ENCODE measurements at regions of chr6 and their contacts with region 1.

Region 1: GRCh38 chr6:137900815-137901214 is 33.8 kb downstream of the TNFAIP3 start:
- DNase-seq: no peak
- ATAC-seq: no peak
- H3K4me3 ChIP-seq: no peak overlapping the region
- H3K27ac ChIP-seq: no peak overlapping the region
- H3K4me1 ChIP-seq: peaks cover 11 to 51% of the 10 kb centered on the region in 2 experiments
- H3K27me3 ChIP-seq: no peaks in the 10 kb centered on the region
- CTCF ChIP-seq: no peak
- EP300 ChIP-seq: no peak
- POLR2A ChIP-seq: no peak
- RAD21 ChIP-seq: no peak

Region 2: DNA sequence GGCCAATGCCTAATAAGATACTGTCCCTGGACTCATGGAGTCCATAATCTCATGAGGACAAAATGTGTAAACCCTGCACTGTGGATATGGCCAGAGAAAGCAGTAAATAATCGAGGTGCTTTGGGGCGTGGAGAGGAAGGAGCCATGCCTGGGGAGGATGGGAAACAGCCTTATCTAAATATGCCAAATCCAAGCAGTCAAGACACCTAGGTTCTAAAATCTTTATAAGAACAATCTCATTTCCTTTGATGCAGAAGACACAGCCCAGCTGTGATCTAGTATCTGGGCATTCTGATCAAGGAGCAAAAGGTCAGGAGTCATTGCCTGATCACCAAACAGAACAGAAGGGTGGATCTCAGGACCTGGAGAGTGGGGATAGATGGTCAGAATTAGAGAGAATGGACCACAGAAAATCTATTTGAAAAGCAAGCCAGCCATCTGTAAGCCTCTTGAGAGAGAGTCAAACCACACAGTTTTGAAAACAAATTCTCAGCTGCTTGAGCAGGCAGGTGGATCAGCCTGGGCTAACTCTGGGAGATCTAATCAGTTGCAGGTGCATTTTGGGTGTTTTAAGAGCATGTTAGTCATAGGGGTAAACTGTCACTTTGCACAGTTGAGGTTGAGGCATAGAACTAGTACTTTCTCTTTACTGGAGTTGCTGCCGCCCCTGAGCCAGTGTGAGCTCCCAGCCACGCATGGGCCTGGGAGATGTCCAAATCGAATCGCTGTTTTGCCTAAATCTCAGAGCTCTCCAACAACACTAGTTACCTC is 164.6 kb before region 1 on chr6:
- CTCF ChIA-PET with region 1: no interaction called
- POLR2A ChIA-PET with region 1: no interaction called
- in situ Hi-C with region 1: no loop called
- intact Hi-C with region 1: no loop called
- DNase-seq: no peak
- ATAC-seq: no peak; the same call in 2 of the 3 replicates
- H3K4me3 ChIP-seq: no peak overlapping the region
- H3K27ac ChIP-seq: no peak overlapping the region
- H3K4me1 ChIP-seq: no peaks in the 10 kb centered on the region; a peak in 1 of 5 replicates
- H3K27me3 ChIP-seq: peaks cover 13 to 20% of the 10 kb centered on the region in 2 experiments; a peak in 4 of 5 replicates
- CTCF ChIP-seq: no peak
- EP300 ChIP-seq: no peak
- POLR2A ChIP-seq: no peak
- RAD21 ChIP-seq: no peak

Region 3: DNA sequence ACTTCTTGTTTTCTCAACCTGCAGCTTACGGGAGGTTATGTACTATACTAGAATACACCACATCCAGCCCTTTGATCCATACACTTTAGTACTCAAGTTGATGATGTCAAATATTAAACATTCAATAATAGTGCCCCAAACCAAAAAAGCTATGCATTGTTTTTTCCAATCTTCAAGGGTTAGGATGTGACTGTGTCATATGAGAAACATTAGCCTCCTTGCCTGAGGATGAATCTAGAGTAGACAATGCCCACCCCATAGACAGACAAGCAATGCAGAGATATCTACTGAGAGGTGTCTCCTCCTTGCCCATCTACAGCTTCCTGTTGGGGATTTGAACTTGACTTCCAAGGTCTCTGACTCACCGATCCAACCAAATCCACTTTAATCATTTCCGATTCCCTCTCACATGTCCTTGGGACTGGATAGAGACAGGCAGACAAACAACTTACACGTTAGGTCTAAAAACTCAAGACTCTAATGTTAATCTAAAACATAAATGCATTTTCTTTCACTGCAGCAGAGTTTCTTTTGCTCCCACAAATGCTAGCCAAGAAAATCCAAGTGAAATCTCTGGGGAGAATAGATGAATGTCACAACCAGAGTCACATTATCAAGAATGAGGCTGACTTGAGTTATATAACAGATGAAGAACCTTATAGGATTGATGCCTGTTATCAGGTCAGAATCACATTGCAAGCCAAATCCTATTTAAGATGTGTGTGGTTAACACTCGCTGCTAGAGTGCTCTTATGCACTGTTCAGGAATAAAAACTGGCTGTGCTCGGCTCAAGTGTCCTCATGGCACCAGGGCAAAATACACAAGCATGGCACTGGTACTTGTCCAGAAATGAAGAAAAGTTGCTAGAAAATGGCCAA is 109.3 kb before region 1 on chr6:
- CTCF ChIA-PET with region 1: no interaction called
- POLR2A ChIA-PET with region 1: no interaction called
- in situ Hi-C with region 1: no loop called
- intact Hi-C with region 1: no loop called
- DNase-seq: no peak
- ATAC-seq: no peak
- H3K4me3 ChIP-seq: no peak overlapping the region
- H3K27ac ChIP-seq: no peak overlapping the region
- H3K4me1 ChIP-seq: peaks cover 0 to 46% of the 10 kb centered on the region in 2 experiments; a peak in 3 of 5 replicates
- H3K27me3 ChIP-seq: no peaks in the 10 kb centered on the region
- CTCF ChIP-seq: no peak
- EP300 ChIP-seq: no peak
- POLR2A ChIP-seq: no peak
- RAD21 ChIP-seq: no peak

Region 4: DNA sequence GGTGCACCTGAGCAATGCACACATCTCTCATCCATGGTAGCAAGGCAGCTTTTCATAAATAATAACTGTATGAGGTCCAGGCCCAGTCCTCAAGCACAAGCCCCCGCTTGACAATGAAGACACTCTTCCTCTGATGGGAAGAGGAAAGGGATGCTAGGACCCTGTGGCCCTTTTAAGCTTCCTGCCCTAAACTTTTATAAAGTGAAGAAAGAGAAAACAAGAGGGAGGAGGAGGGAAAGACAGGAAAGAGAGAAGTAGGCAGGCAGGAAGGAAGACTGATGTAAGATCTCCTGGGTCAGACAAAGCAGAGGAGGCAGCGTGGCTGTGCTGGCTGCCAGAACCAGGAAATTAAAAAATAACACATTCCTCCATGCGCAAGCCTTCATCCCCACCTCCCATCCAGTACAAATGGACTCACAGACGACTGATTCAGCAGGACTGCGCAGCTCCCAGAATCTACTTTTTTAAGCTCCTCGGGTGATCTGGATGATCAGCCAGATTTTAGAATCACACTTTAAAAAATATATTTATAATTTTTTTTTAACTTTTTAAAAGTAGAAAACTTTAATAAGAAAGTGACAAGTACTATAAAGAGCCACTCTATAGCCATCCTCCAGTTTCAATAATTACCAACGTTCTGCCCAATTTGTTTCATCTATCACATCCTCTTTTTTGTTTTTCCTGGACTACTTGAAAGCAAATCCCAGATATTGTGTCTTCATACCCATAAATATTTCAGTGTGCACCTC is 17.2 kb before region 1 on chr6:
- CTCF ChIA-PET with region 1: no interaction called
- POLR2A ChIA-PET with region 1: interaction called, 14 read pairs
- in situ Hi-C with region 1: no loop called
- intact Hi-C with region 1: no loop called
- DNase-seq: no peak
- ATAC-seq: peak; percentile 75
- H3K4me3 ChIP-seq: no peak overlapping the region
- H3K27ac ChIP-seq: no peak overlapping the region
- H3K4me1 ChIP-seq: peaks cover 0 to 5% of the 10 kb centered on the region in 2 experiments; a peak in 3 of 5 replicates
- H3K27me3 ChIP-seq: no peaks in the 10 kb centered on the region
- CTCF ChIP-seq: no peak
- EP300 ChIP-seq: no peak
- POLR2A ChIP-seq: 0 out of 2 replicates have a peak, but pooled peaks have one; percentile 26
- RAD21 ChIP-seq: peak in 1 of 2 experiments; percentile 4; a peak in 1 of 4 replicates

Region 5: GRCh38 chr6:138222901-138223546 is 322.2 kb after region 1 on chr6:
- CTCF ChIA-PET with region 1: no interaction called
- POLR2A ChIA-PET with region 1: no interaction called
- in situ Hi-C with region 1: no loop called
- intact Hi-C with region 1: no loop called
- DNase-seq: no peak
- ATAC-seq: no peak
- H3K4me3 ChIP-seq: no peak overlapping the region
- H3K27ac ChIP-seq: no peak overlapping the region
- H3K4me1 ChIP-seq: no peaks in the 10 kb centered on the region
- H3K27me3 ChIP-seq: peaks cover 0 to 8% of the 10 kb centered on the region in 2 experiments; a peak in 1 of 5 replicates
- CTCF ChIP-seq: no peak
- EP300 ChIP-seq: no peak
- POLR2A ChIP-seq: no peak
- RAD21 ChIP-seq: no peak